Left cardiac atrium (tissue), 4 donors: ENCODE measurements at regions of chr19 and their contacts with region 1.

Region 1: DNA sequence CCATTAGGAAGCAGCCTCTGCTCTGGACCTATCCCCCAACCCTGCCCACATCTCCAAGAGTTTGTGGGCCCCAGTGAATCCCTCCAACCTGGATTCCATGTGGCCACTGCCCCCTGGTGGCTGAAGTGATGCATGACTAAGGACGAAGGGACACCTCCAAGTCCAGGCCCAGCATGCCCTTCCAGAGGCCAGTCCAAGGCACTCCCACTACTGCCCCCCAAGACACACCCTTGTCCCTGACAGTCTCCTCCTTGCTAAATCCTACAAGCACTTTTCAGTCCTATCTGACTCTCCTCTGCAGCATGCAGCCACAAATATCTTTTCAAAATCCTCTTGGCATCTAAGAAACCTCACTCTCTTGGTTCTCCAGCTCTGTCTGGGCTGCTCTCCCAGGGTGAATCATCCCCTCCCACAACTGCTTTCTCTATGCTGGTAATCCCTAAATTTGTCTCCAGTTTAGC is 33.0 kb downstream of the DEDD2 start:
- DNase-seq: peak; percentile 78
- ATAC-seq: peak; percentile 77 to 90

Region 2: GRCh38 chr19:42108527-42109389 is 75.7 kb before region 1 on chr19:
- intact Hi-C with region 1: loop called in 1 of 2 experiments (anchors 5 kb)
- DNase-seq: peak; percentile 83
- ATAC-seq: peak; percentile 78 to 81

Region 3: GRCh38 chr19:42132851-42133528 is 51.4 kb before region 1 on chr19:
- intact Hi-C with region 1: loop called (anchors 5 kb)
- DNase-seq: peak; percentile 64
- ATAC-seq: peak; percentile 83 to 87